HCT116 (cell line): ENCODE measurements at regions of chr19 and their contacts with region 1.

Region 1: DNA sequence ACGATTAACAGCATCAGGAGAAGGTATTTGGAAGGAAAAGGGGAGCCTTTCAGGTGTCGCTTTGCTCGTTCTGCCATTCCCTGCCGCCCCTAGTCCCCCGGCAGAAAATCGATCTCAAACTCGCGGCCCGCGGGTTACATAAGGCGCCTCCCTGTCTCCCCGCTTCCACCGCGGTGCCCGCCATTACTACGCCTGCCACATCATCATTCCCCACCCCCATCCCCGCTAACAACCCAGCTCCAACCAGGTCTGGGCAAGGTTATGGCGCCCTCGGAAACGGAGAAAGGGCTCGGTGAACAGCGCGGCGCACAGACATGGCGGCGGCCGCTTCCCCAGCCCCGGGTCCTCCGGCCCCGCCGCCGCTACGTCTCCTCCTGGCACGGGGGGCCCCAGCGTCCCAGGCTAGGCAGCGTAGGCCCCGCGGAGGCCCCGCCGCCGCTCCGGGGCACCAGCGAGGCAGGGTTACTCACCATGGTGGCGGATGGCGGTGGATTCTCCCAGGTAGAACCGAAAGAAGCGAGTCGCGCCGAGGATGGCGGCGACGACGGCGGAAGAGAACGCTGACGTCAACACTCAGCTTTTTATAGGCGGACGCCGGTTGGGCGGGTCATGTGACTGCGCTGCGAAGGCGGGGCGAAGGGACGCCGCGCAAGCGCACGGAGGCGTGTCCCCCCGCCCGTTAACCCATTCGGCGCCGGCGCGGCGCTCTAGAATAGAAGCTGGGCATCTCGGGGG is at the start of gene EEF2:
- DNase-seq: peak; percentile 68
- ATAC-seq: peak; percentile 26
- H3K4me3 ChIP-seq: peak within 1 kb of the TSS; percentile 95
- H3K27ac ChIP-seq: peak within 1 kb of the TSS; percentile 98
- H3K4me1 ChIP-seq: peaks cover 22 to 47% of the 10 kb centered on the region in 2 experiments
- H3K27me3 ChIP-seq: no peaks in the 10 kb centered on the region
- CTCF ChIP-seq: no peak
- POLR2A ChIP-seq: peak; percentile 99
- RAD21 ChIP-seq: no peak
- total RNA-seq, gene EEF2: 3,796 TPM

Region 2: GRCh38 chr19:3665681-3666544 is 319.2 kb before region 1 on chr19:
- CTCF ChIA-PET with region 1: no interaction called
- POLR2A ChIA-PET with region 1: no interaction called
- RAD21 ChIA-PET with region 1: no interaction called
- intact Hi-C with region 1: no loop called
- DNase-seq: no peak
- ATAC-seq: peak; percentile 90
- H3K4me3 ChIP-seq: no peak overlapping the region
- H3K27ac ChIP-seq: no peak overlapping the region
- H3K4me1 ChIP-seq: peaks cover 0 to 8% of the 10 kb centered on the region in 2 experiments; a peak in 1 of 4 replicates
- H3K27me3 ChIP-seq: no peaks in the 10 kb centered on the region
- CTCF ChIP-seq: peak; percentile 77 to 89 (median 81)
- POLR2A ChIP-seq: no peak
- RAD21 ChIP-seq: peak; percentile 90

Region 3: GRCh38 chr19:3970808-3971598 is 14.1 kb before region 1 on chr19 and contains the start of gene DAPK3:
- CTCF ChIA-PET with region 1: interaction called, 14 read pairs
- POLR2A ChIA-PET with region 1: interaction called, 60 read pairs
- RAD21 ChIA-PET with region 1: no interaction called
- intact Hi-C with region 1: no loop called
- DNase-seq: peak; percentile 96
- ATAC-seq: peak; percentile 84
- H3K4me3 ChIP-seq: peak within 1 kb of the TSS; percentile 82 to 96
- H3K27ac ChIP-seq: peak within 1 kb of the TSS; percentile 76
- H3K4me1 ChIP-seq: peaks cover 15 to 30% of the 10 kb centered on the region in 2 experiments
- H3K27me3 ChIP-seq: no peaks in the 10 kb centered on the region
- CTCF ChIP-seq: no peak
- POLR2A ChIP-seq: no peak
- RAD21 ChIP-seq: no peak
- total RNA-seq, gene DAPK3: 54.8 TPM

Region 4: GRCh38 chr19:3995627-3996026 is 10.6 kb after region 1 on chr19:
- CTCF ChIA-PET with region 1: interaction called, 15 read pairs
- POLR2A ChIA-PET with region 1: interaction called, 3 read pairs
- RAD21 ChIA-PET with region 1: no interaction called
- intact Hi-C with region 1: no loop called
- DNase-seq: no peak
- ATAC-seq: no peak
- H3K4me3 ChIP-seq: no peak overlapping the region
- H3K27ac ChIP-seq: no peak overlapping the region
- H3K4me1 ChIP-seq: peaks cover 3 to 7% of the 10 kb centered on the region in 2 experiments; a peak in 1 of 4 replicates
- H3K27me3 ChIP-seq: no peaks in the 10 kb centered on the region
- CTCF ChIP-seq: no peak
- POLR2A ChIP-seq: no peak
- RAD21 ChIP-seq: no peak

Region 5: DNA sequence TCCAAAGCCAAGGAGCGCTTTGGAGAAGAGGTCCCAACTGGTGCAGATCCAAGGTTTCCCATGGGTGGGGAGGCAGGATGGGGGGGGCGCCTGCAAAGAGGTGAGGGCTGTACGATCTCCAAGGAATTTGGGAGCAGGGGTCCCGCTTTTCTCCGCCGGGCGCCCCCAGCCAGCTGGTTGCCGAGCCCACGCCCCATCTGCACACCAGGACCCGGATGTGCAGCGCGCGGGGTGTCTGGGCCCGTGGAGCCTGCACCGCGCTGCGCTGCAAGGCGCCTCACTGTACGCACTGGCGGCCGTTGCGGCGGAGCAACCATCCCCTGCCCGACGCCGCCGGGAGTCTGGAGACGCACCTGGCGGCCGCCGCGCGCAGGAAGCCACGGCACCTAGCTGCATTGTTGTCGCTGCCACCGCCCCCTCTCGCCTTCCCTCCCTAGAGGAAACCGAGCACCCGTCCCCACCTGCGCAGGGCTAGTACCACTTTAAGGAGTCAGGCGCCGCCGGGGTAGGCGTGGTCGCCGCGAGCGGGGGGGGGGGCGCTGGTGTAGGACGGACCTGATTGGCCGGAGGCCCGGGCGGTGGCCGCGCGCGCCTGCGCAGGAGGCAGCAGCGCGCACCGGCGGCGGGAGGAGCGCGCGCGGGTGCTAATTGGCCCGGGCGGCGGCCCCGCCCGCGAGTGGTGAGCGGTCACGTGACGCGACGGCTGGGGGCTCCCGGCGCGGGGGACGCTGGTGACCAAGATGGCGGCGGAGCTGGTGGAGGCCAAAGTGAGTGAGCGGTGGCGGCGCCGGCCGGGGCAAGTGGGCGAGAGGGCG is 22.2 kb after region 1 on chr19 and contains the start of gene PIAS4:
- CTCF ChIA-PET with region 1: interaction called, 10 read pairs
- POLR2A ChIA-PET with region 1: interaction called, 8 read pairs
- RAD21 ChIA-PET with region 1: no interaction called
- intact Hi-C with region 1: no loop called
- DNase-seq: peak; percentile 88
- ATAC-seq: peak; percentile 93
- H3K4me3 ChIP-seq: peak within 1 kb of the TSS; percentile 94 to 98
- H3K27ac ChIP-seq: peak within 1 kb of the TSS; percentile 94
- H3K4me1 ChIP-seq: peaks cover 7 to 14% of the 10 kb centered on the region in 2 experiments; a peak in 3 of 4 replicates
- H3K27me3 ChIP-seq: no peaks in the 10 kb centered on the region
- CTCF ChIP-seq: no peak
- POLR2A ChIP-seq: peak; percentile 54
- RAD21 ChIP-seq: no peak
- total RNA-seq, gene PIAS4: 28.4 TPM

Region 6: DNA sequence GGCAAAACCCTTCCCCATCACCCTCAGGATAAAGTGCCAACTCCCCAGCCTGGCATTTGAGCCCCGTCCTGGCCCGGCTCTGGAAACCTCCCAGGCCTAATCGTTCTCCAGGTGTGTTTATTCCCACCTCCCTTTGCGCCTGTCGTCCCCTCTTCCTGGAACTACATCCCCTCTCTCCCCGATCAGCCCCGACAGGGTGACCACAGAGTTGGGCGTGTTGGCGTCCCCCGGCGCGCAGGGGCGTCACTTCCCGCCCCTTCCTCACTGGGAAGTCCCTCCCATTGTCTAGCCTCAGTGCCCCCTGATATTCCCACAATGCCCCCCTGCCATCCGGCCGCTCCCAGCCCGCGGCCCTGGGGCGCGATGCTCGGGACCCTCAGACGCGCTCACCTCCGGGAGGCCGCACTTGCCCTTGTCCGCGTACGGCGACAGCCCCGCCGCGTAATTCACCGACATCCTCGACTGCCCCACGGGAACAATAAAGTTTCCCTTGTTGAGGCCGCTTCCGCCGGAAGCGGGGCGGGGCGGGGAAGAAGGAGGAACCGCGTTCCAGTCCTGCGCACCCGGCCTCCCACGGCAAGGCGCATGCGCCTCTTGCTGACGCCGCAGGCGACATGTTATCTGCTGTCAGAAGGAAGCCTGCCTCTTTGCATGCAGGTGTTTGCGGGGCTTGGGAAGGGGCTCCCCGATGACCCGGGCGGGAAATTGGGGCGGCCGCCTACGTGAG is 197.2 kb after region 1 on chr19 and contains the starts of genes ANKRD24 and SIRT6:
- CTCF ChIA-PET with region 1: interaction called, 3 read pairs
- POLR2A ChIA-PET with region 1: interaction called, 3 read pairs
- RAD21 ChIA-PET with region 1: no interaction called
- intact Hi-C with region 1: loop called (anchors 5 kb)
- DNase-seq: peak; percentile 89
- ATAC-seq: peak; percentile 76
- H3K4me3 ChIP-seq: peak within 1 kb of the TSS; percentile 80 to 98
- H3K27ac ChIP-seq: peak within 1 kb of the TSS; percentile 77
- H3K4me1 ChIP-seq: peaks cover 10 to 29% of the 10 kb centered on the region in 2 experiments
- H3K27me3 ChIP-seq: no peaks in the 10 kb centered on the region
- CTCF ChIP-seq: no peak
- POLR2A ChIP-seq: peak; percentile 49
- RAD21 ChIP-seq: no peak
- total RNA-seq, gene ANKRD24: 1.7 TPM
- total RNA-seq, gene SIRT6: 36.3 TPM

Region 7: GRCh38 chr19:4208385-4209094 is 223.5 kb after region 1 on chr19:
- CTCF ChIA-PET with region 1: interaction called, 14 read pairs
- POLR2A ChIA-PET with region 1: interaction called, 5 read pairs
- RAD21 ChIA-PET with region 1: interaction called in 1 of 2 experiments, 4 read pairs
- intact Hi-C with region 1: loop called (anchors 1 kb)
- DNase-seq: peak; percentile 66
- ATAC-seq: peak; percentile 77
- H3K4me3 ChIP-seq: peak overlapping the region; percentile 40 to 48
- H3K27ac ChIP-seq: peak overlapping the region; percentile 70
- H3K4me1 ChIP-seq: peaks cover 21 to 40% of the 10 kb centered on the region in 2 experiments
- H3K27me3 ChIP-seq: no peaks in the 10 kb centered on the region
- CTCF ChIP-seq: peak; percentile 76 to 78 (median 77)
- POLR2A ChIP-seq: no peak
- RAD21 ChIP-seq: peak; percentile 77